GM10248 (cell line): ENCODE measurements at regions of chr3 and their contacts with region 1.

Region 1: DNA sequence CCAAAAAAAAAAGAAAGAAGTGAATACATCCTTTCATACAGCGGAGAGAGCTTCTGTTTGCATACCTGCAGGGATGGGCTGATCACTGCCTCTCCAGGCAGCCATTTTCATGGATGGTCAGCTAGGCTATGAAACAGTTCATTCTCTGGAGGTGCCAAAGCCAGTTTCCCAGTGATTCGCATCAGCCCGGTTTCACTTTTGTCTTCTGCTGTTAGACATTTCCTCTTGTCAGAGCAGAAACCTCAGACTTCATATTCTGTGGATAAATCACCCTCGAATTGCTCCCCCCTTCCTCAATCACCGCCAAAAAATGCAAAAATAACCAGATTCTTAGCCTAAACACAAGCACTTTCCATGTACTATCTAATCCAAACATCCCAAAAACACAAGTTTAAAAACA is 225.6 kb downstream of the ADAMTS9 start:
- DNase-seq: no peak
- CTCF ChIP-seq: no peak

Region 2: GRCh38 chr3:64030741-64031140 is 431.5 kb before region 1 on chr3:
- CTCF ChIA-PET with region 1: interaction called, 22 read pairs
- POLR2A ChIA-PET with region 1: no interaction called
- DNase-seq: peak; percentile 78
- CTCF ChIP-seq: peak; percentile 83

Region 3: GRCh38 chr3:64345371-64345770 is 116.8 kb before region 1 on chr3:
- CTCF ChIA-PET with region 1: no interaction called
- POLR2A ChIA-PET with region 1: no interaction called
- DNase-seq: no peak
- CTCF ChIP-seq: no peak

Region 4: GRCh38 chr3:64411101-64411500 is 51.1 kb before region 1 on chr3:
- CTCF ChIA-PET with region 1: interaction called, 22 read pairs
- POLR2A ChIA-PET with region 1: no interaction called
- DNase-seq: no peak
- CTCF ChIP-seq: no peak

Region 5: GRCh38 chr3:64445321-64446300 is 16.6 kb before region 1 on chr3:
- CTCF ChIA-PET with region 1: interaction called, 69 read pairs
- POLR2A ChIA-PET with region 1: no interaction called
- DNase-seq: peak; percentile 24
- CTCF ChIP-seq: no peak

Region 6: GRCh38 chr3:64484289-64484992 is 22.2 kb after region 1 on chr3:
- CTCF ChIA-PET with region 1: interaction called, 52 read pairs
- POLR2A ChIA-PET with region 1: no interaction called
- DNase-seq: peak; percentile 69
- CTCF ChIP-seq: peak; percentile 83

Region 7: GRCh38 chr3:64595253-64595694 is 133.1 kb after region 1 on chr3:
- CTCF ChIA-PET with region 1: no interaction called
- POLR2A ChIA-PET with region 1: no interaction called
- DNase-seq: no peak
- CTCF ChIP-seq: no peak